GM12878 (cell line): ENCODE measurements at regions of chr18 and their contacts with region 1.

Region 1: DNA sequence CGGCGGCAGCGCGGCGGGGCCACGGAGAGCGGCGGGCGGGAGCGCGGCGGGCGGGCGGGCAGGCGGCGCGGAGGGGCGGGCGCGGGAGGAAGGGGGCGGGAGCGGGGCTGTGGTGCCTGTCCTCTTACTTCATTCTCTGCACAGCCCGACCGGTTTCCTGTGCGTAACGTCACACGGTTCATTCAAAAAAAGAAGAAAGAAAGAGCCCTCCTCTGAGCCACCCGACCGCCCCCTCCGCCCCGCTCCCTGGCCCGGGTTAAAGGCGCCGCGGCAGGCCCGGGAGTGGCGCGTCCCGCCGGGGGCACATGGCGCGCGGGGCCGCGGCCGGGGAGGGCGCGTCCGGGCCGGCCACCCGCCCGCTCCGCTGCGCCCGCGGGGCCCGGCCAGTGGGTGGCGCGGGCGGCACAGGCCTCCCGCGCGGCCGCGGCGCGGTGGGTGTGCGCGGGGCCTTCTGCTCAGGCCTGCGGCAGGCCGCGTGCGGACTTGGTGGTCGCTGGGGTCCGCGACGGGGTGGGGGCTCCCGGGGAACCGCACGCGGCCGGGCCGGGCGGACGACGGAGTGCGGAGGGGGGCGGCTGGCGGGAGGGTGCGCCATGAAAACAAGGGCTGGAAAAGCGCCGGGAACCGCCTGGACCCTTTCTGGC is 599 bp upstream of the BCL2 start:
- DNase-seq: no peak
- ATAC-seq: peak; percentile 37
- H3K4me3 ChIP-seq: peak overlapping the region; percentile 54; the same call in 1 of the 2 replicates
- H3K27ac ChIP-seq: peak overlapping the region; percentile 90
- H3K4me1 ChIP-seq: peaks cover 20% of the 10 kb centered on the region
- H3K27me3 ChIP-seq: no peaks in the 10 kb centered on the region
- CTCF ChIP-seq: no peak; a peak in 1 of 6 replicates
- EP300 ChIP-seq: no peak
- POLR2A ChIP-seq: no peak; the same call in 1 of the 2 replicates
- RAD21 ChIP-seq: no peak

Region 2: GRCh38 chr18:63025251-63026090 is 294.7 kb before region 1 on chr18:
- CTCF ChIA-PET with region 1: interaction called, 77 read pairs
- POLR2A ChIA-PET with region 1: interaction called, 3 read pairs
- RAD21 ChIA-PET with region 1: interaction called, 7 read pairs
- SMC1A ChIA-PET with region 1: interaction called, 14 read pairs
- in situ Hi-C with region 1: no loop called
- intact Hi-C with region 1: no loop called
- DNase-seq: no peak
- ATAC-seq: peak; percentile 59; the same call in 2 of the 3 replicates
- H3K4me3 ChIP-seq: no peak overlapping the region
- H3K27ac ChIP-seq: no peak overlapping the region
- H3K4me1 ChIP-seq: no peaks in the 10 kb centered on the region
- H3K27me3 ChIP-seq: no peaks in the 10 kb centered on the region
- CTCF ChIP-seq: peak; percentile 36 to 59 (median 40); a peak in 4 of 6 replicates
- EP300 ChIP-seq: no peak
- POLR2A ChIP-seq: no peak
- RAD21 ChIP-seq: peak; percentile 72

Region 3: DNA sequence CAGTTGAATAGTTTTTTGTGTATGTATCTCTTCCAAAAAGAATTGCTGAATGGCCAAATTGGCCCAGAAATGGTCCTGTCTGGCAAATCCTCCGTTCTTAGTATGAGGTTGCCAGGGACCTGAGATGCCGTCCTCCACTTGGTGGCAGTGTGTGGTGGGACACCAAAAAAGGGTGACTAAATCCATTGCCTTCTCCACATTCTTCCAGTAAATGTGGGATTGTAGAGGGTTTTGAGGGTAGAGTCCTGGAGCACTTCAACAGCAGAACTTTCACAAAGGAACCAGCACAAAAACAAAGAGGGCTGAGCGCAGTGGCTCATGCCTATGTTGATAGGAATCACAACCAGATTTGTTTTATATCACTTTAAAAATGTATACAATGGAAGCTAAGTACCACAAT is 200.5 kb before region 1 on chr18:
- CTCF ChIA-PET with region 1: interaction called, 70 read pairs
- POLR2A ChIA-PET with region 1: interaction called, 4 read pairs
- RAD21 ChIA-PET with region 1: interaction called, 10 read pairs
- SMC1A ChIA-PET with region 1: interaction called, 19 read pairs
- in situ Hi-C with region 1: no loop called
- intact Hi-C with region 1: loop called (anchors 1 kb)
- DNase-seq: no peak
- ATAC-seq: peak; percentile 78
- H3K4me3 ChIP-seq: no peak overlapping the region
- H3K27ac ChIP-seq: no peak overlapping the region
- H3K4me1 ChIP-seq: no peaks in the 10 kb centered on the region
- H3K27me3 ChIP-seq: no peaks in the 10 kb centered on the region
- CTCF ChIP-seq: peak; percentile 49 to 65 (median 52); a peak in 5 of 6 replicates
- EP300 ChIP-seq: no peak
- POLR2A ChIP-seq: no peak
- RAD21 ChIP-seq: peak; percentile 70

Region 4: GRCh38 chr18:63155169-63155852 is 164.9 kb before region 1 on chr18:
- CTCF ChIA-PET with region 1: interaction called, 119 read pairs
- POLR2A ChIA-PET with region 1: interaction called, 144 read pairs
- RAD21 ChIA-PET with region 1: interaction called, 172 read pairs
- SMC1A ChIA-PET with region 1: interaction called, 161 read pairs
- in situ Hi-C with region 1: no loop called
- intact Hi-C with region 1: loop called (anchors 1 kb)
- DNase-seq: peak; percentile 88
- ATAC-seq: peak; percentile 46
- H3K4me3 ChIP-seq: peak overlapping the region; percentile 76; the same call in 1 of the 2 replicates
- H3K27ac ChIP-seq: peak overlapping the region; percentile 100
- H3K4me1 ChIP-seq: peaks cover 84% of the 10 kb centered on the region
- H3K27me3 ChIP-seq: no peaks in the 10 kb centered on the region
- CTCF ChIP-seq: peak in 2 of 3 experiments; percentile 96 to 98; a peak in 4 of 6 replicates
- EP300 ChIP-seq: peak; percentile 72 to 79; a peak in 3 of 4 replicates
- POLR2A ChIP-seq: peak; percentile 54; the same call in 1 of the 2 replicates
- RAD21 ChIP-seq: peak; percentile 78

Region 5: DNA sequence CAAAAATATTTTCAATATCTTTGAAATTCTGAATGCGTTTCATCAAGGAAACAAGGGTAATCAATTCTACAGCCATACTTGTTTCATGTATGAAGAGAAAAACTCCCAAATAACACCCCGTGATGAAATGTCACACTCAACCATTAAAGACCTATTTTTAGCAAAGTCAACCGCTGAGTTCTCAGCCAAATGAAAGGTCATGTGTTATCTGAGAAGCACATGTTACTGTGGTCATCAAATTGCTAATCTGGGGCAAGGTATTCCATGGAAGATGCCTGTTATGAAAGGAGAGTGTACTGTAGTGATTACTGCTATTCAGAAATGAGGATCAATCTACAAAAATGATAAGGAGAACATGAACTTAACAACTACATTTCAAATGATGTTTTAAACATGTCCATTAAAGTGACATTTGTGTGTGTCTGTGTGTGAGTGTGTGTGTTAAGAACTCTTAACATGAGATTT is 127.3 kb before region 1 on chr18:
- CTCF ChIA-PET with region 1: interaction called, 7 read pairs
- POLR2A ChIA-PET with region 1: interaction called, 5 read pairs
- RAD21 ChIA-PET with region 1: interaction called, 10 read pairs
- SMC1A ChIA-PET with region 1: interaction called, 14 read pairs
- in situ Hi-C with region 1: no loop called
- intact Hi-C with region 1: no loop called
- DNase-seq: peak; percentile 72
- ATAC-seq: peak; percentile 75
- H3K4me3 ChIP-seq: no peak overlapping the region
- H3K27ac ChIP-seq: peak overlapping the region; percentile 51
- H3K4me1 ChIP-seq: peaks cover 27% of the 10 kb centered on the region
- H3K27me3 ChIP-seq: no peaks in the 10 kb centered on the region
- CTCF ChIP-seq: no peak
- EP300 ChIP-seq: peak; percentile 85 to 86
- POLR2A ChIP-seq: no peak
- RAD21 ChIP-seq: no peak

Region 6: GRCh38 chr18:63299837-63300745 is 20.1 kb before region 1 on chr18:
- CTCF ChIA-PET with region 1: interaction called, 15 read pairs
- POLR2A ChIA-PET with region 1: no interaction called
- RAD21 ChIA-PET with region 1: interaction called, 7 read pairs
- SMC1A ChIA-PET with region 1: interaction called, 15 read pairs
- in situ Hi-C with region 1: no loop called
- intact Hi-C with region 1: no loop called
- DNase-seq: no peak
- ATAC-seq: peak; percentile 83
- H3K4me3 ChIP-seq: no peak overlapping the region; the same call in 1 of the 2 replicates
- H3K27ac ChIP-seq: peak overlapping the region; percentile 55
- H3K4me1 ChIP-seq: peaks cover 48% of the 10 kb centered on the region
- H3K27me3 ChIP-seq: no peaks in the 10 kb centered on the region
- CTCF ChIP-seq: no peak
- EP300 ChIP-seq: 0 out of 4 replicates have a peak, but pooled peaks of 1 of the 2 experiments have one; percentile 23
- POLR2A ChIP-seq: no peak
- RAD21 ChIP-seq: no peak

Region 7: DNA sequence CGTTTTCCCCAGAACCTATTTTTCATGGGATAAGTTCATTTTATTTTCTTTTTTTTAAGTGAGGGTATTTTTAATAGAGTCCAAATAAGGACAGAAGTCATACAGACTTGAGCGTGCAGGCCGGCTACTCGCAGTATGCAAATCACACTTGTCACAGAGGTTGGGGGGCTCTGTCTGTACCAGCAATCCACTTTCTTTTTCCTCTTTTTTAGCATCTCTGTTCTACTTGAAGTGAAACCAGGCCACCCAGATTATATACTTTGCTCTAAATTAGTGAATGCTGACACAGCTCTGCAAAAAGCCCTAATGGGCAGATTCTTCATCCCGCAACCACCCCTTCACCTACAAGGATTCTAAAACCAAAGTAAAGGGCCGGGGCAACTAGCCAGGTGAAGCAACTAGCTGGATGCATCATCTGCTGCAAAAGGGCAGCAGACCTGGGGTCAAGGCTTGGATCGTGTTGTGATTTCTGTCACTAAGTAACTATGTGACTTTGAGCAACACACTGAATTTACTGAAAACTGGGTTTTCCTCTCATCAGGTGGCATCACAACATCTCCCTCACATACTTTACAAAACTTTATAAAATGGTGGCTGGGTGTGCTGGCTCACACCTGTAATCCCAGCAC is 28.5 kb after region 1 on chr18:
- CTCF ChIA-PET with region 1: no interaction called
- POLR2A ChIA-PET with region 1: no interaction called
- RAD21 ChIA-PET with region 1: no interaction called
- SMC1A ChIA-PET with region 1: no interaction called
- in situ Hi-C with region 1: no loop called
- intact Hi-C with region 1: no loop called
- DNase-seq: no peak
- ATAC-seq: no peak
- H3K4me3 ChIP-seq: no peak overlapping the region
- H3K27ac ChIP-seq: no peak overlapping the region
- H3K4me1 ChIP-seq: no peaks in the 10 kb centered on the region
- H3K27me3 ChIP-seq: no peaks in the 10 kb centered on the region
- CTCF ChIP-seq: no peak
- EP300 ChIP-seq: no peak
- POLR2A ChIP-seq: no peak
- RAD21 ChIP-seq: no peak

Region 8: GRCh38 chr18:63405986-63406385 is 85.8 kb after region 1 on chr18:
- CTCF ChIA-PET with region 1: no interaction called
- POLR2A ChIA-PET with region 1: no interaction called
- RAD21 ChIA-PET with region 1: no interaction called
- SMC1A ChIA-PET with region 1: no interaction called
- in situ Hi-C with region 1: no loop called
- intact Hi-C with region 1: no loop called
- DNase-seq: no peak
- ATAC-seq: no peak
- H3K4me3 ChIP-seq: no peak overlapping the region
- H3K27ac ChIP-seq: no peak overlapping the region
- H3K4me1 ChIP-seq: no peaks in the 10 kb centered on the region
- H3K27me3 ChIP-seq: no peaks in the 10 kb centered on the region
- CTCF ChIP-seq: no peak
- EP300 ChIP-seq: no peak
- POLR2A ChIP-seq: no peak
- RAD21 ChIP-seq: no peak

Region 9: GRCh38 chr18:63439334-63439733 is 119.2 kb after region 1 on chr18:
- CTCF ChIA-PET with region 1: interaction called, 15 read pairs
- POLR2A ChIA-PET with region 1: no interaction called
- RAD21 ChIA-PET with region 1: interaction called, 20 read pairs
- SMC1A ChIA-PET with region 1: interaction called, 7 read pairs
- in situ Hi-C with region 1: no loop called
- intact Hi-C with region 1: loop called (anchors 5 kb)
- DNase-seq: no peak
- ATAC-seq: peak; percentile 78
- H3K4me3 ChIP-seq: no peak overlapping the region
- H3K27ac ChIP-seq: no peak overlapping the region
- H3K4me1 ChIP-seq: no peaks in the 10 kb centered on the region
- H3K27me3 ChIP-seq: no peaks in the 10 kb centered on the region
- CTCF ChIP-seq: peak; percentile 82 to 86 (median 86)
- EP300 ChIP-seq: no peak
- POLR2A ChIP-seq: no peak
- RAD21 ChIP-seq: peak; percentile 85